CD8-positive, alpha-beta memory T cell (primary cell): ENCODE measurements at regions of chr20 and their contacts with region 1.

Region 1: GRCh38 chr20:47379433-47380150 is 23.1 kb upstream of the ZMYND8 start:
- DNase-seq: no peak
- H3K4me3 ChIP-seq: no peak overlapping the region
- H3K4me3 Mint-ChIP-seq: no peak overlapping the region
- H3K27ac ChIP-seq: no peak overlapping the region
- H3K27ac Mint-ChIP-seq: peak overlapping the region in 2 of 8 donors; percentile 13 to 65
- H3K4me1 ChIP-seq: peaks cover 10% of the 10 kb centered on the region
- H3K4me1 Mint-ChIP-seq: peaks cover 5 to 15% (median 5%) of the 10 kb centered on the region in 3 donors
- H3K27me3 ChIP-seq: no peaks in the 10 kb centered on the region
- H3K27me3 Mint-ChIP-seq: peaks cover 0 to 1% of the 10 kb centered on the region in 2 donors

Region 2: GRCh38 chr20:47102629-47103028 is 277.0 kb before region 1 on chr20:
- CTCF ChIA-PET with region 1: no interaction called
- POLR2A ChIA-PET with region 1: no interaction called
- DNase-seq: no peak
- H3K4me3 ChIP-seq: no peak overlapping the region
- H3K4me3 Mint-ChIP-seq: no peak overlapping the region
- H3K27ac ChIP-seq: no peak overlapping the region
- H3K27ac Mint-ChIP-seq: no peak overlapping the region
- H3K4me1 ChIP-seq: no peaks in the 10 kb centered on the region
- H3K4me1 Mint-ChIP-seq: no peaks in the 10 kb centered on the region
- H3K27me3 ChIP-seq: no peaks in the 10 kb centered on the region
- H3K27me3 Mint-ChIP-seq: peaks cover 29 to 52% of the 10 kb centered on the region in 2 donors

Region 3: GRCh38 chr20:47196091-47197081 is 183.2 kb before region 1 on chr20:
- CTCF ChIA-PET with region 1: interaction called, 38 read pairs
- POLR2A ChIA-PET with region 1: no interaction called
- DNase-seq: peak; percentile 52 to 79 (median 60)
- H3K4me3 ChIP-seq: no peak overlapping the region
- H3K4me3 Mint-ChIP-seq: peak overlapping the region in 1 of 7 donors; percentile 48
- H3K27ac ChIP-seq: no peak overlapping the region
- H3K27ac Mint-ChIP-seq: no peak overlapping the region
- H3K4me1 ChIP-seq: peaks cover 4% of the 10 kb centered on the region
- H3K4me1 Mint-ChIP-seq: peaks cover 6% of the 10 kb centered on the region in 3 donors
- H3K27me3 ChIP-seq: no peaks in the 10 kb centered on the region
- H3K27me3 Mint-ChIP-seq: peaks cover 2 to 3% of the 10 kb centered on the region in 2 donors

Region 4: DNA sequence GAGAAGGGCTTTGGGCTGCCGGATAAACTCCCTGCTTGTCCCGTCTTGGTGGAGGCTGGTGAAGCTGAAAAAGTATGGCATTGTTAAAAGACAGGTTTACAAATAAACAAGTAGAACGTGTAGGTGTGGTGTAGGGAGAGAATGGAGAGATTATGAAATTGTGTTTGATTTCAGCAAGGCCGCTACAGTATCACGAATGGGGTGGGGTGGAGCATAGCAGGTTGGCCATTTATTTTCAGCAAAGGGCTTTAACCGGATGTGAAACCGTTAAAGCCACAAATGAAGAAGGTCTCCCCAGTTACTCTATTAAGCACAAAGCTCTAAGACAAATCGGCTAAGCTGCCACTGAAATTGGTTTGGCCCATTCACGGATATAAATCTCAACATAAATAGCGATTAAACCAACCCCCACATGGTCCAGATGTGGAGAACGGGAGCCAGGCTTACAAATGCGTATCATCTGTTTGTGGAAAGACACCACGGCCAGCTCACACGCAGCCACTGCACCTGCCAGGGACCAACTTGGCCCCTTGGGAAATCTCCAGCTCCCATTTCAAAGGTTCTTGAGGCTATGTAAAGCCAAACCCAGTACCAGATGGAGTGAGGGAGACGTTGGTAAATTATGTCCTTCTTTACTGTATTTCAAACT is 117.1 kb before region 1 on chr20:
- CTCF ChIA-PET with region 1: interaction called, 15 read pairs
- POLR2A ChIA-PET with region 1: no interaction called
- DNase-seq: no peak
- H3K4me3 ChIP-seq: no peak overlapping the region
- H3K4me3 Mint-ChIP-seq: no peak overlapping the region
- H3K27ac ChIP-seq: no peak overlapping the region
- H3K27ac Mint-ChIP-seq: peak overlapping the region in 1 of 8 donors; percentile 94
- H3K4me1 ChIP-seq: no peaks in the 10 kb centered on the region
- H3K4me1 Mint-ChIP-seq: peaks cover 25 to 34% (median 26%) of the 10 kb centered on the region in 3 donors
- H3K27me3 ChIP-seq: no peaks in the 10 kb centered on the region
- H3K27me3 Mint-ChIP-seq: no peaks in the 10 kb centered on the region

Region 5: GRCh38 chr20:47278563-47279348 is 100.8 kb before region 1 on chr20:
- CTCF ChIA-PET with region 1: interaction called, 361 read pairs
- POLR2A ChIA-PET with region 1: no interaction called
- DNase-seq: no peak
- H3K4me3 ChIP-seq: no peak overlapping the region
- H3K4me3 Mint-ChIP-seq: no peak overlapping the region
- H3K27ac ChIP-seq: no peak overlapping the region
- H3K27ac Mint-ChIP-seq: peak overlapping the region in 4 of 8 donors; percentile 8 to 85 (median 34)
- H3K4me1 ChIP-seq: no peaks in the 10 kb centered on the region
- H3K4me1 Mint-ChIP-seq: peaks cover 7 to 15% (median 11%) of the 10 kb centered on the region in 3 donors
- H3K27me3 ChIP-seq: no peaks in the 10 kb centered on the region
- H3K27me3 Mint-ChIP-seq: no peaks in the 10 kb centered on the region

Region 6: GRCh38 chr20:47317127-47317895 is 62.3 kb before region 1 on chr20:
- CTCF ChIA-PET with region 1: interaction called, 14 read pairs
- POLR2A ChIA-PET with region 1: interaction called, 6 read pairs
- DNase-seq: peak; percentile 9 to 50 (median 17)
- H3K4me3 ChIP-seq: no peak overlapping the region
- H3K4me3 Mint-ChIP-seq: peak overlapping the region in 3 of 7 donors; percentile 27 to 72 (median 52)
- H3K27ac ChIP-seq: peak overlapping the region; percentile 10
- H3K27ac Mint-ChIP-seq: peak overlapping the region; percentile 47 to 92 (median 87)
- H3K4me1 ChIP-seq: peaks cover 48% of the 10 kb centered on the region
- H3K4me1 Mint-ChIP-seq: peaks cover 57 to 82% (median 78%) of the 10 kb centered on the region in 3 donors
- H3K27me3 ChIP-seq: no peaks in the 10 kb centered on the region
- H3K27me3 Mint-ChIP-seq: no peaks in the 10 kb centered on the region

Region 7: GRCh38 chr20:47411161-47411560 is 31.6 kb after region 1 on chr20:
- CTCF ChIA-PET with region 1: interaction called, 10 read pairs
- POLR2A ChIA-PET with region 1: no interaction called
- DNase-seq: no peak
- H3K4me3 ChIP-seq: no peak overlapping the region
- H3K4me3 Mint-ChIP-seq: no peak overlapping the region
- H3K27ac ChIP-seq: no peak overlapping the region
- H3K27ac Mint-ChIP-seq: peak overlapping the region in 1 of 8 donors; percentile 29
- H3K4me1 ChIP-seq: peaks cover 20% of the 10 kb centered on the region
- H3K4me1 Mint-ChIP-seq: peaks cover 13 to 35% (median 21%) of the 10 kb centered on the region in 3 donors
- H3K27me3 ChIP-seq: no peaks in the 10 kb centered on the region
- H3K27me3 Mint-ChIP-seq: no peaks in the 10 kb centered on the region

Region 8: DNA sequence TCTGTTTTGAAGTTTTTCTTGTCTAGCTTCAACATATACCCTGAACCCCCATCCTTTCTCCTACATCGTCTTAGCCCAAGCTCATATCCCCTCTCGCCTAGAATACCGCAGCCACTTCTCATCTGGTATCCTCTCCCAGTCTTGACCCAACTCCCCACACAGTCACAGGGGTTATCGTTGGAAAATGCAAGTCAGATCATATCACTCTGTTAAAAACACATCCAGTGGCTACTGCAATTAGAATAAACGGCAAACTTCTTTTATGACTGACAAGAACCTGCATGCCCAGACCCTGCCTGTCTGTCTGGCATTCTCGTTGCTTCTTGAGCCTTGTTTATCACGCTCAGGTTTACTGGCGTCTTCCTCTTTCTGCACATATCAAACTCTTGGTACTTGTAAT is 102.2 kb after region 1 on chr20:
- CTCF ChIA-PET with region 1: no interaction called
- POLR2A ChIA-PET with region 1: no interaction called
- DNase-seq: no peak
- H3K4me3 ChIP-seq: no peak overlapping the region
- H3K4me3 Mint-ChIP-seq: no peak overlapping the region
- H3K27ac ChIP-seq: no peak overlapping the region
- H3K27ac Mint-ChIP-seq: peak overlapping the region in 2 of 8 donors; percentile 3 to 18
- H3K4me1 ChIP-seq: peaks cover 2% of the 10 kb centered on the region
- H3K4me1 Mint-ChIP-seq: peaks cover 1 to 9% (median 2%) of the 10 kb centered on the region in 3 donors
- H3K27me3 ChIP-seq: no peaks in the 10 kb centered on the region
- H3K27me3 Mint-ChIP-seq: no peaks in the 10 kb centered on the region

Region 9: DNA sequence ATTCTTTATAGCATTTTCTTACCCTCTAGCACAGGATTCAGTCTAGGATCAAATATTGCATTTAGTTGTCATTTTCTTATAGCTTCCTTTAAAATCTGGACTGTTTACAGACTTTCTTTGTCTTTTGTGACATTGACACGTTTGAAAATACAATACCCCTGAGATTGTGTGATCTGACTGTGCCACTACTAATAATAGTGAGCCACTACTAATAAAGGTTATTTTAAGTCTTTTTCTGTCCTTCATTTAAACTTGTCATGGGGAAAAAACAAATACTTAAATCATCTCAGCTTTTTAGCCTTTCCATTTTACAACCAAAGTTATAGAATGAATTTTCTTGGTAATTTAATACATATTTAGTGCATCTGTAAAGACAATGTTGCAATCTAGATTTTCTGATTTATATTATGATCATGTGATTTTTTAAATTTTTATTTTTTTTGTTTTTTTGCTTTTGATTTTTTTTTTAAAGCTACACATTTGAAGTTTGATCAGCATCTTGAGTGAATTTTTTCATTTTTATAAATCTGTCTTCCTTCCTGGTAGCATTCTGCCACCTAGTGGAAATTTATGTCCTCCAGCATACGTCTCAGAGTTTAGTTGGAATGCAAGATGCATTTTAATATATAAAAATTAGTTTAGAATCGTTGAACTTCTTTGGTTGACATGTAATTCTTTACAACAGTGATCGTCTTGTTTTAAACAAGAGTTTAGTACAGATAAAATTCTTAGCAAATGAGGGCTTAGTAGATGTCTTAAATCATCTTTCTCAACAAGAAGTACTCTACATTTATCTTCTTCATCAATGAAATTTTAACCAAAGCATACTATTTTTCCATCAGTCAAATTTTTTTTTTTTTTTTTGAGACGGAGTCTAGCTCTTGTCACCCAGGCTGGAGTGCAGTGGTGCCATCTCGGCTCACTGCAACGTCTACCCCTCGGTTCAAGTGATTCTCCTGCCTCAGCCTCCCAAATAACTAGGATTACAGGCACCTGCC is 241.5 kb after region 1 on chr20:
- CTCF ChIA-PET with region 1: interaction called, 58 read pairs
- POLR2A ChIA-PET with region 1: interaction called, 4 read pairs
- DNase-seq: peak in 2 of 5 donors; percentile 25 to 35
- H3K4me3 ChIP-seq: no peak overlapping the region
- H3K4me3 Mint-ChIP-seq: no peak overlapping the region
- H3K27ac ChIP-seq: no peak overlapping the region
- H3K27ac Mint-ChIP-seq: peak overlapping the region in 3 of 8 donors; percentile 26 to 36 (median 31)
- H3K4me1 ChIP-seq: no peaks in the 10 kb centered on the region
- H3K4me1 Mint-ChIP-seq: peaks cover 17 to 31% (median 22%) of the 10 kb centered on the region in 3 donors
- H3K27me3 ChIP-seq: no peaks in the 10 kb centered on the region
- H3K27me3 Mint-ChIP-seq: peaks cover 0 to 2% of the 10 kb centered on the region in 2 donors